ENCODE measurements at regions of chr9 and their contacts with region 1.

Region 1: DNA sequence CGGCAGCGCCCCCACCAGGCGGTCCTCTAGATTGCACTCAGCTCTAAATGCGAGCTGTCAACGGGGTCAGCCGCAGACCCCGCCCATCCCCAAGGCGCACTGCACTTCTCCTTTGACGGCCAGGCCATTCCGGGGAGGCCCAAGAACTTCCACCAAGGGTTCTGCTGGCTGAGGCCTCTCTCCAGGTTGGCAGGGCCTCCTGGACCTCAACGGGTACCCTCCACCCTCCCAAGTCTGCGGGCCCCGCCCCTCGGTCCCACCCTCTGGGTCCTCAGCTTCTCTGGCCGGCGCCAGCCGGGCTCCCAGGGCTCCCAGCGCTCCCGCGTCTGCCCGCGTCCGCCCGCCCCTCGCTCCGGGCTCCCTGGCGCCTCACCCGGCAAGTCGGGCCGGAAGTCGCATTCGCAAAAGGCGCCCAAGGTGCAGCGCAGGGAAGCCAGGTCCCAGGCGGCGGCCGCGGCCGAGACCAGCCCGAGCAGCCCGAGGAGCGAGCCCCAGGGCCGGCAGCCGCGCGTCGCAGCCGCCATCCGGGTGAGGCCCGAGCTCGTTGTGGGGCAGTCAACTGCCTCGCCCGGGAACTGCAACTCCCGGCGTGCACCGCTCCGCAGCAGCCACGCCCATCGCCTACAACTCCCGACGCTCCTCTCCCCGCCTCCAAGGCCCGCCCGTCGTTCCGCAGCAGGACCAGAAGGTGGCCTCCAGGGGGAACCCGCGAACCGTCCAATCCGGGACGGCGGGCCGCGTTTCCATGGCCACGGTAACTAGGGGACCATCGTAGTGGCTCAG is at the start of gene TOR2A:
- DNase-seq: peak; percentile 97 to 98
- H3K4me3 ChIP-seq: peak within 1 kb of the TSS; percentile 40 to 80 (median 48)
- H3K27ac ChIP-seq: peak within 1 kb of the TSS; percentile 91 to 97 (median 92)
- H3K4me1 ChIP-seq: peaks cover 4 to 7% of the 10 kb centered on the region in 2 donors
- H3K27me3 ChIP-seq: no peaks in the 10 kb centered on the region
- CTCF ChIP-seq: peak; percentile 84 to 100 (median 96)
- POLR2A ChIP-seq: peak; percentile 56 to 90
- total RNA-seq, gene TOR2A: 8.9 to 23.1 (median 14.2) TPM

Region 2: DNA sequence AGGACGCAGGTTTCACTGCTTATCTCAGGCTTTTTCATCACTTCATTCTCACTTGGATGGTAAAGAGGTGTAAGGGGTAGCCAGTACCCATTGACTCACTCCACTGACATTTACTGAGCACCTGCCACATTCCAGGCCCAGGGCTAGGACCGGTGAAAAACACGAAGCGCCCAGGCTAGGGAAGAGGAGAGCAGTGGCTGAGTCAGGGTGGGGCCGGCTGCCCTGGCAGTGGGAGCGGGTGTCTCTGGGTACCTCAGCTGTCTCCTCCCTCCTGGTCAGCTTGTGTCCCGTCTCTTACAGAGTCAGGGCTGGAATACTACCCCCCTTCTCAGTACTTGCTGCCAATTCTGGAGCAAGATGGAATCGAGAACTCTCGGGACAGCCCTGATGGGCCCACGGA is 261.4 kb before region 1 on chr9:
- intact Hi-C with region 1: no loop called
- DNase-seq: no peak
- H3K4me3 ChIP-seq: no peak overlapping the region
- H3K27ac ChIP-seq: no peak overlapping the region
- H3K4me1 ChIP-seq: no peaks in the 10 kb centered on the region
- H3K27me3 ChIP-seq: no peaks in the 10 kb centered on the region
- CTCF ChIP-seq: no peak
- POLR2A ChIP-seq: no peak

Region 3: DNA sequence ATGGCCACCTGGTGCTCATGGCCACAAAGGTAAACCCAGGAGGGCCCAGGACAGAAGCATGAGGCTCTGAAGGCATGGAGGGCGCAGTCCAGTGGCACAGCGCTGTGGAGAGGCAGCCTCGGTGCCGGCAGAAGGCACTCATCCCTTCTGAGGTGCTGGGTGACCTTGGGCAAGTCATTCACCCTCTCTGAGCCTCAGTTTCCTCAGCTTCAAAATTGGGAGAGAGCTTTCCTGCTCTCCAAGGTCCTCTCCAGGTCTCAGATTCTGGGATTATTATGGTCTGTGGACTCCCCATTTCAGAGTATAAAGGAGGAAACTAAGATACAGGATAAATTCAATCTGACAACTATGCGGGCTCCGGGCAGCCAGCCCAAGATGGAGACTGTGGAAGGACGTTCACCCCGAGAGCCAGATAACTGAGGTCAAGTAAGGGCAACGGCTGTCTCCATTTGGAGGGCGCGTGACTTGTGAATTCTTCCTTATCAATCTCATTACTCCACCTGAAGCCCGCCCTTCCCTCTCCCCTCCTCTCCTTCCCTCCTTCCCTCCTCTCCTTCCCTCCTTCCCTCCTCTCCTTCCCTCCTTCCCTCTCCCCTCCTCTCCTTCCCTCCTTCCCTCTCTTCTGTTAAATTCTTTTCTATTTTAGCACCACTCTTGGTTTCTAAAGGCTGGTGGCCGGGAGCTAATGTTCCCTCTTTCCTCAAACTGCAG is 225.5 kb before region 1 on chr9:
- intact Hi-C with region 1: loop called (anchors 2 kb)
- DNase-seq: no peak
- H3K4me3 ChIP-seq: no peak overlapping the region
- H3K27ac ChIP-seq: peak overlapping the region in 2 of 3 donors; percentile 36 to 49
- H3K4me1 ChIP-seq: no peaks in the 10 kb centered on the region
- H3K27me3 ChIP-seq: no peaks in the 10 kb centered on the region
- CTCF ChIP-seq: no peak
- POLR2A ChIP-seq: no peak

Region 4: DNA sequence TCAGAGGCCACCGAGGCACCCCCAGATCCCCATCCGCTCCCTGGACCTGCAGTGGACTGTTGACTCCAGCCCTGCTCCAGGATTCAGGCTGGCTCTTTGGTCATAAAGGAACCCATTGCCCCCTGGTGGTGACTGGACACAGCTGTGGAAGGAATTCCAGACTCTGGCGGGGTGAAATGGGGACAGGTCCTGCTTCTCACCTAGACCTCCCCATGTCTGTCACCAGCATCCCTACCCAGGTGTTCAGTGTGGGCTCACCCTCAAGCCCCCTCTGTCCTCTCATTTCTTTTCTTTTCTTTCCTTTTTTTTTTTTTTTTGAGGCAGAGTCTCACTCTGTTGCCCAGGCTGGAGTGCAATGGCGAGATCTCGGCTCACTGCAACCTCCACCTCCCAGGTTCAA is 148.4 kb before region 1 on chr9:
- intact Hi-C with region 1: loop called (anchors 1 kb)
- DNase-seq: peak; percentile 86 to 89
- H3K4me3 ChIP-seq: no peak overlapping the region
- H3K27ac ChIP-seq: no peak overlapping the region
- H3K4me1 ChIP-seq: peaks cover 3 to 14% of the 10 kb centered on the region in 2 donors
- H3K27me3 ChIP-seq: no peaks in the 10 kb centered on the region
- CTCF ChIP-seq: peak; percentile 81 to 96 (median 86)
- POLR2A ChIP-seq: no peak

Region 5: DNA sequence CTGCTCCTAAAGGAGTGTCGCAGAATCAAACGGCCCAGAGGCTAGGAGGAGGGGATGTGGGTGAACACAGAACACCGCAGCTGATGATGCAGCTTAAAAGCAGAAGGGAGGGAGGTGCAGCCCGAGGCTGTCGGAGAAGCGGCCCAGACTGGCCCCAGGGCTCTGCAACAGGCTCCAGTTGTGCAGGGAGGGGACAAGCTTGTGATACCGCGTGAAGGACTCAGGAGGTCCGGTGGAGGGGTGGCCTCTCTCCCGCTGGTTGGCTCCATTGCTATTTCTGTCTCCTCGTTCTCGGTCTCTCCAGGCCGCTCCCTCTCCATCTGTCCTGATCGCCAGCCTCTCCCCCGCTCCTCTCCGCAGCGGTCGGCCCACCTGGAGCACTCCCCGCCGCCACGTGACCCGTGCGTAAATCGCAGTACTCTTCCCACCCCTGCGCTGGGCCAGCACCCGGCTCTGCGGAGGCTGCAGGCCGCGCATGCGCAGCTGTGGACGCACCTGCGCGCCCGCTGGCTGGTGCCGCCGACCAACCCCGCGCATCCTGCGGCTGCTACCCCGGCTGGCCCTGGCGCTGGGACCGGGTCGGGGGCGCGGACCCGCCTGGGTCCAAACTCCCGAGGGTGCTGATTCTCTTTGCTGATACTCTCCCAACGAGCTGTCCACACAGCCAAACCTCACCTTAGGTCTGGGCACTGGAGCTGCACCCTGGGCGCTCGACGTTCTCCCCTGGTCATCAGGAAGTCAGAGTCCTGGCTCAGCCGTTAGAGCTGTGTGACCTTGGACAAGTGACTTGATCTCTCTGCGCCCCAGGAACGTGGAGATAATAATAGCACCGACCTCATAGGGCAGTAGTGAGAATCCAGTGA is 126.6 kb before region 1 on chr9:
- intact Hi-C with region 1: loop called (anchors 5 kb)
- DNase-seq: peak; percentile 90 to 91
- H3K4me3 ChIP-seq: peak overlapping the region in 1 of 3 donors; percentile 24
- H3K27ac ChIP-seq: peak overlapping the region in 2 of 3 donors; percentile 16 to 47
- H3K4me1 ChIP-seq: peaks cover 10% of the 10 kb centered on the region in 2 donors
- H3K27me3 ChIP-seq: no peaks in the 10 kb centered on the region
- CTCF ChIP-seq: no peak
- POLR2A ChIP-seq: peak in 1 of 2 donors; percentile 68

Region 6: DNA sequence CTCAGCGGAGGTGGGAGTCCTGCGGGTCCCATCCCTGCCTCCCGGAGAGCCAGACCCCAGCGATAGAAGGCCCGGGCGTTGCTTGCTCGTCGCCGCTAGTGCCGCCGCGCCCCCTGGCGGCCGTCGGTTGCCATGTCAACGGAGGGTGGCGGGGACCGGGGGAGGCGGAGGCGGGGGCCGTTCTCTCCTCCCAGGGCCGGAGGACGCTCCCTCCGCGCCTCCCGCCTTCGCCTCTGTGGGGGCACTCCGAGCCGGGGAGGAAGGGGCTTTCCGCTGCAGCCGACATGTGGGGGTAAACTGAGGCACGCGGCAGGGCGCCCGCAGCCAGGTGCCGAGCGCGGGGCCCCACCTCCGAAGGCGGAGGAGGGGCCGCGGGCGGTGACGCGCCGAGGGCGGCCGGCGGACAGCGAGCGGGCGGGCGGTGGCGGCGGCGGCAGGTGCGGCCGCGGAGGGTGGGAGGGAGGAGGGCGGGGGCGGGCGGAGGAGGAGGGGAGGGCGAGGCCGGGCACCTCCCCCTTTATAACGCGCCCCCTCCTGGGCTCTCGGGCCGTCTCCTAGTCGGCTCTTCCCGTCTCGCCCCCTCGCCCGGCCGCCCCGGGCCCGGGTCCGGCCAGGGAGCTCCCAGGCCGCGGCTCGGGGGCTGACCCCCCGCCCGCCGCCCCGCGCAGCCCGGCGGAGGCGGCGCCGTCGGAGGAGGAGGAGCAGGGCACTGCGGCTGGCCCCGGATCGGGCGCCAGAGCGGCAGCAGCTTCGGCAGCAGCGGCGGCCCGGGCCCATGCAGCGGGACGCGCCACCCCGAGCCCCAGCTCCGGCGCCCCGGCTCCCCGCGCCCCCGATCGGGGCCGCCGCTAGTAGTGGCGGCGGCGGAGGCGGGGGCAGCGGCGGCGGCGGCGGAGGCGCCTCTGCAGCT is 50.3 kb after region 1 on chr9:
- intact Hi-C with region 1: loop called (anchors 5 kb)
- DNase-seq: peak; percentile 83 to 87
- H3K4me3 ChIP-seq: peak overlapping the region in 2 of 3 donors; percentile 68 to 91
- H3K27ac ChIP-seq: peak overlapping the region; percentile 87 to 92 (median 92)
- H3K4me1 ChIP-seq: peaks cover 8 to 34% of the 10 kb centered on the region in 2 donors
- H3K27me3 ChIP-seq: no peaks in the 10 kb centered on the region
- CTCF ChIP-seq: peak; percentile 72 to 95 (median 86)
- POLR2A ChIP-seq: no peak

Region 7: GRCh38 chr9:127869310-127870152 is 134.6 kb after region 1 on chr9:
- intact Hi-C with region 1: loop called (anchors 5 kb)
- DNase-seq: peak; percentile 84 to 89
- H3K4me3 ChIP-seq: no peak overlapping the region
- H3K27ac ChIP-seq: no peak overlapping the region
- H3K4me1 ChIP-seq: peaks cover 19 to 23% of the 10 kb centered on the region in 2 donors
- H3K27me3 ChIP-seq: no peaks in the 10 kb centered on the region
- CTCF ChIP-seq: peak; percentile 64 to 94 (median 82)
- POLR2A ChIP-seq: no peak

Region 8: DNA sequence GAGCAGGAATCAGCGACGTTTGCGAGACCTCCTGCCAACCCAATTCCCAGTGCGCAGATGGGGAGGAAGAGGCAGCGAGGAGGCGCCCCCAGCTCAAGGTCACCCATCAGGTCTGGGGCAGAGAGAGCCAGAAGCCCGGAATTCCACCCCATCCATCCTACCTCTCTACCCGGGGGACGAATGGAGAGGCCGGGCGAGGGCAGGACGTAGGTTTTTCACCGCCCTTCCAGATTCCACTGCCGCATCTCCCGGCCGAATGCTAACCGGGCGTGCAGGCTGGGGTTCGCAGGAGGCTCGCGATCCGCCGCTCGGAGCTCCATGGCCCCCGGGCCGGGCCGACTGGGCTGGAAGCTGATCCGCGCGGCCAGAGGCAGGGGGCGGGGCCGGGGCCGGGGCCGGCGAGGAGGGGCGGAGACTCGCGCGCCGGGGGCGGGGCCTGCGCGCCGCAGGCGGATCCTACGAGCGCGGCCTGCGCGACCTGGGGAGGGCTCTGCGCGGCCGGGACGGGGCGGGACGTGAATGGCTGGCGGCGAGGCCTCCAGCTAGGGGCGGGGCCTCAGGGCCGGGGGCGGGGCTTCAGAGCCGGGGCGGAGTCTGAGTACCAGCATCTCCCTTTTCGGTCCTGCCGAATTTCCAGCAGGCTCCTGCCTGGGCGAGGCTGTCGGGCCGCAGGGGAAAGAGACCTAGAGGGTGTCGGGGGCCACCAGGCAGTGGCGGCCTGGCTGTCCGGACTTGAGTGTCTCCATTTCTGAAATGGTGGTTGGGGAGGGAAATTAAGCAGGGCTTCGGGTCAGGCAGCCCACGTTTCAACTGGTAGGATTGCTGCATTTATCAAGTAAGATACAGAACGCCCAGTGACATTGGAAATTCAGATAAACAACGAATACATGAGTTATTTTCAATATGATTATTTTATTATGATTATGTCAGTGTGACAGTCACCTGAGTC is 182.0 kb after region 1 on chr9 and contains the start of gene ST6GALNAC4:
- intact Hi-C with region 1: loop called (anchors 5 kb)
- DNase-seq: peak; percentile 94
- H3K4me3 ChIP-seq: peak within 1 kb of the TSS; percentile 12 to 61 (median 57)
- H3K27ac ChIP-seq: peak within 1 kb of the TSS in 2 of 3 donors; percentile 24 to 46
- H3K4me1 ChIP-seq: peaks cover 21 to 55% of the 10 kb centered on the region in 2 donors
- H3K27me3 ChIP-seq: no peaks in the 10 kb centered on the region
- CTCF ChIP-seq: no peak
- POLR2A ChIP-seq: peak in 1 of 2 donors; percentile 44
- total RNA-seq, gene ST6GALNAC4: 8.9 to 27.4 (median 19.1) TPM

Measured in thyroid gland (tissue), 4 donors.